ENCODE measurements at regions of chr13 and their contacts with region 1.

Region 1: GRCh38 chr13:27792393-27793218 is at the start of gene GSX1:
- DNase-seq: peak; percentile 68
- H3K4me3 Mint-ChIP-seq: peak within 1 kb of the TSS; percentile 66
- H3K27ac Mint-ChIP-seq: no peak within 1 kb of the TSS
- H3K4me1 Mint-ChIP-seq: peaks cover 36% of the 10 kb centered on the region
- H3K27me3 Mint-ChIP-seq: peaks cover 76% of the 10 kb centered on the region
- total RNA-seq, gene GSX1: not detected

Region 2: DNA sequence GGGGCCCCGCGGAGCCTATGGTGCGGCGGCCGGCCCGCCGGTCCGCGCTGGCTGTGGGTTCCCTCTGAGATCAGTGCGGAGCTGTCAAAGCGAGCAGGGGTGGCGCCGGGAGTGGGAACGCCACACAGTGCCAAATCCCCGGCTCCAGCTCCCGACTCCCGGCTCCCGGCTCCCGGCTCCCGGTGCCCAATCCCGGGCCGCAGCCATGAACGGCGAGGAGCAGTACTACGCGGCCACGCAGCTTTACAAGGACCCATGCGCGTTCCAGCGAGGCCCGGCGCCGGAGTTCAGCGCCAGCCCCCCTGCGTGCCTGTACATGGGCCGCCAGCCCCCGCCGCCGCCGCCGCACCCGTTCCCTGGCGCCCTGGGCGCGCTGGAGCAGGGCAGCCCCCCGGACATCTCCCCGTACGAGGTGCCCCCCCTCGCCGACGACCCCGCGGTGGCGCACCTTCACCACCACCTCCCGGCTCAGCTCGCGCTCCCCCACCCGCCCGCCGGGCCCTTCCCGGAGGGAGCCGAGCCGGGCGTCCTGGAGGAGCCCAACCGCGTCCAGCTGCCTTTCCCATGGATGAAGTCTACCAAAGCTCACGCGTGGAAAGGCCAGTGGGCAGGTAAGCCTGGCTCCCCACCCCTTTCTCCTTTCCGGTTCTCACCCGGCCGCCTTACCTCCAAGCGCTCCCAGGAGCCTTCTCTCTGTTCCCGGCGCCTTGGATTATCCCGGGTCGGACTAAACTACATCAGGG is 127.5 kb after region 1 on chr13 and contains the start of gene PDX1:
- CTCF ChIA-PET with region 1: no interaction called
- POLR2A ChIA-PET with region 1: no interaction called
- intact Hi-C with region 1: loop called (anchors 5 kb)
- DNase-seq: no peak
- H3K4me3 Mint-ChIP-seq: peak within 1 kb of the TSS; percentile 66
- H3K27ac Mint-ChIP-seq: peak within 1 kb of the TSS; percentile 6
- H3K4me1 Mint-ChIP-seq: peaks cover 37% of the 10 kb centered on the region
- H3K27me3 Mint-ChIP-seq: peaks cover 71% of the 10 kb centered on the region
- total RNA-seq, gene PDX1: not detected